Astrocyte of the cerebellum (primary cell): ENCODE measurements at regions of chr6 and their contacts with region 1.

Region 1: DNA sequence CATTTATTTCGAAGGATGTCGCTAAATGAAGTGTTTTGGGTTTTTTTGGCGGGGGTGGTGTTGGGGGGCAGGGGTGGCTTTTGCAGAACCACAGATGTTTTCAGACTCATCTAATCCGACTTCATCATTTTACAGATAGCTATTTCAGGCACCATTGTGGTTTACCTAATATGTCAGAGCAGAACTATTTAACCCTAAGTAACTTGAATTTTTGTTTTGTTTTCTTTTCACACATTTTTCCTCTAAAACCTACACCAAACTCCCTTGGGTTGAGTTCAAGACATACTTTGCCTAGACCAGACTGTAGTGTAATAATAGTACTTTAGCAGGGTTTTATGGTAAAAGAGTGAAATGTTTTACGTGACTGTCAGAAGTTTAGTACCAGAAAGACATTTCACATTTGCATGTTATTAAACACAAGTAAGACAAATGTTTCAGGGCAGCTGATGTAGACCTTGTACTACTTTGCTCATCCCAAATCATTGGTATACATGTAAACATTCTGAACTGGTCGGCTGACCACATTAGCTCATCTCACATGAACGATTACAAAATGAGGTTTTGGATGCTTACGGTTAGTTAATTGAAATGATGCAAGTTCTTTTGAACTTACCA is 37.7 kb downstream of the MAP3K4 start:
- DNase-seq: peak; percentile 87
- H3K4me3 ChIP-seq: no peak overlapping the region
- CTCF ChIP-seq: no peak

Region 2: DNA sequence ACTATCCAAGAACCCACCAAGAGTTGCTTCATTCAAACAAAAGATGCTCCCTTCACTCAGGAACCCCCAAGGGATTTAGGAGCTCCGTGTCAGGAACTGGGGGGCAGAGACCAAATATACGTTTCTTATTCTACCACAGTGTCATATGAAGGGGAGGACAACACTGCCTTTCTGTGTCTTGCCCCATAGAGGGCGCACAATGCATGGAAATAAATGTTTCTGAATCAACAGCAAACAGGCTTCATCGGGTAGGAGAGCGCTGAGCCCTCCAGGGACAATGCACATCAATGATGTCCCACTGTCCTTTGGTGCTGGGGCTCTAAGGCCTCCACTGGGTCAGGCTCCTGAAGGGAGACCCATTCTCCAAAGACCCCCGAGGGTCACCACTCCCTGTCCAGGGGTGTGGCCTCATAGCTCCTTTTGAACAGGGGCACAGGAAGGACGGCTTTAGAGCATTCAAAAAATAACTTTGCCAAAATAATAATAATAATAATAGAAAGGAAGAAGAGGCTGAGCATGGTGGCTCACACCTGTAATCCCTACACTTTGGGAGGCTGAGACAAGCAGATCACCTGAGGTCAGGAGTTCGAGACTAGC is 296.2 kb before region 1 on chr6:
- in situ Hi-C with region 1: no loop called
- DNase-seq: peak; percentile 16
- H3K4me3 ChIP-seq: no peak overlapping the region
- CTCF ChIP-seq: peak; percentile 72

Region 3: DNA sequence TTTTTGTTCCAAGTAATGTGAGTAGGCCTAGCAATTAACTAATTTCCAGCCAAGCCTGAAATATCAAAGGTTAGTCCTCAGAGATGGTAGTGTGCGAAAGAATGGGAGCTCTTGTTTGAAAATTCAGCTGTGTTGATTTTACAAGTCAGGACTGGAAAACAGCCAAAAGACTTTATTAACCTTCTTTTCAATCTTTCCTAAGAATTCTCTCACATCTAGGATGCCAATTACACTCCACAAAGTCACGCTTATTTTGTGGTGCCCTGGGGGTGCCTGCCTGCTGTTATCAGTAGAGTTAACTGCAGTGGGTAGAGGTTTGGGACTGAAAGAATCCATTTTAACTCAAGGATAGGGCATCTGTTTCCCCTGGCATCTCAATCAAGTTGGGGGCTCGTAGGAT is 68.5 kb before region 1 on chr6:
- in situ Hi-C with region 1: no loop called
- DNase-seq: no peak
- H3K4me3 ChIP-seq: no peak overlapping the region
- CTCF ChIP-seq: no peak

Region 4: GRCh38 chr6:160972111-160972510 is 57.2 kb before region 1 on chr6:
- in situ Hi-C with region 1: loop called (anchors 10 kb)
- DNase-seq: peak; percentile 94
- H3K4me3 ChIP-seq: no peak overlapping the region
- CTCF ChIP-seq: no peak

Region 5: DNA sequence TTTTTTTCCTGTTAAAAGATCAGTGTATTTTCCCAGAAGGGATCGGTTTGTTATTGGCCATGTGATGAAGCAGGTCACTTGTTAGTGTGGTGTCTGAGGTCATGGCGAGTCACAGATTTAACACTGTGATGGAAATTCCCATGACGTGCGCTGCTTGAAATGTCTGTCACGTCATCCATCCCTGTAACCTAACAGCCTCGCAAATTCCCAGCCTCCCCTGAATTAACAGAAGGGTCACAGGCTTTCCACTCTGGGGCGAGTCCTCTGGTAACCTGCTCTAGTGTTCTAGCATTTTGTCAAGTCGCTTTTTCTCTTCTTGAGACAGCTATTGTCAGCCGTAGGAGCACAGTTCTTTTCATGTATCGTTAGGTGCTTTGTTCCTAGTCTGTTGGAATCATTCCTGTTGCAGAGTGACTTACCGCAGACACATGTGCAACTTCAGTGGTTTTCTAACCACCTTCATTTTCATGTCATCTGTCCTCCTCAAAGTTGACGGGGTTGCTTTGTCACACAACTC is 99.4 kb after region 1 on chr6:
- in situ Hi-C with region 1: no loop called
- DNase-seq: peak; percentile 33
- H3K4me3 ChIP-seq: no peak overlapping the region
- CTCF ChIP-seq: no peak